GM10248 (cell line): ENCODE measurements at regions of chr11 and their contacts with region 1.

Region 1: GRCh38 chr11:75142714-75143419 is 8.0 kb upstream of the SLCO2B1 start:
- DNase-seq: peak; percentile 68
- CTCF ChIP-seq: peak; percentile 6

Region 2: GRCh38 chr11:74929431-74930363 is 213.2 kb before region 1 on chr11:
- CTCF ChIA-PET with region 1: interaction called, 22 read pairs
- POLR2A ChIA-PET with region 1: no interaction called
- DNase-seq: peak; percentile 54
- CTCF ChIP-seq: peak; percentile 90

Region 3: DNA sequence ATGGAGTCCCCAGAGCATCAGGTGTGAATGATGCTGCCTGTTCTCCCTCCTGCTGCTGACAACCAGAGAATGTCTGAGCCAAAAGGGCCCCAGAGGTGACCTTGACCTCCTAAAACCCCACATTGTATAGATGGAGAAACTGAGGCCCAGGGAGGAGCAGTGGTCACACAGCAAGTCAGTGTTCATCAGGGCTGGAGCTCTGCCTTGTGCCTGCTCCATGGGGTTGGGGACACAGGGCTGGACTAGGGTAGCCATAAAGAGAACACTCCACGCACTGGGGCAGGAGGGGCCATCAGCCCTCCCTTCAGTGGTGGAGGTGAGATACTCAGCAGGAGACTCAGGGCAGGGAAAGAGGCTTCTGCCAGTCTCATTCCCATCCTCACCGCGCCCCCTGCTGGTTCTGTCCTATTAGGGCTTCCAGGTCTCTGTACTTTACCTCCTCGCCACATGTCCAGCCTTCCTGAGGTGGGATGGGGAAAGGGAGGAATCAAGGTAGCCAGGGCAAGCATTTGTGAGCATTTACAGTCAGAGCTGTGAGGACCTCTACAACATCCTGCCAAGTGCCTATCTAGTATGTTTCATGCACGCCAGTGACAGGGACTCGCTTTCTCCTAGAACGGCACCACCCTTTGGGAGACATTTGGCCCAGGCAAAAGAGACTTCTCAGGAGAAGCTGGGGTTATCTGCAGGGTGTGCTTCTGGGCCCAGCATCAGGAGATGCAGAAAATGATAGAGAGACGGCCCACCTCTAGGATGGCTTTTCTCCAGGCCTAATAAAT is 110.9 kb before region 1 on chr11:
- CTCF ChIA-PET with region 1: interaction called, 12 read pairs
- POLR2A ChIA-PET with region 1: no interaction called
- DNase-seq: peak; percentile 74
- CTCF ChIP-seq: peak; percentile 82

Region 4: DNA sequence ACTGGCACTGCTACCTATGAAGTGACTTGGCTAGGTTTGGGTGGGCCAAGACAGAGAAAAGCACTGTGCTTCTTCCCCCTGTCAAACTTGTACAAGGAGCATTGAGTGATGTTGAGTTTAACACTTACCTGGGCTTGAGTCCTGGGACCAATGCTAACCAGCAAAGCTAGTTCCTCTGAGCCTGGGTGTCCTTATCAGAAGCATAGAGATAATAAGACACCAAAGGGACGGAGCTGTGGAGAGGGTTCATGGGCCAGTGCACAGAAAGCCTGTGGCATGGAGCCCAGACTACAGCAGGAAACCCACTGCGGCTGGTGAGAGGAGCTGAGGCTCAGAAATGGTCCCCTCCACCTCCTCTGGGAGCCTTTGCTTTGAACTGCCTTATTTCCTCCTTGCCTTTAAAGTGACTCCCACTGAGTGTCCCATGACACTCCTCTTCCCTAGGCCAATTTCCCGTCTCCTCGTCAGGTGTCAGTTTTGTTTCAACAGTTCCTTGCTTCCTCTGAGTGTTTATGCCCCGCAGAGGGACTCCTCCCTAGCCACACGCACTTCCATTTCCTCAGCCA is 17.4 kb after region 1 on chr11:
- CTCF ChIA-PET with region 1: interaction called, 126 read pairs
- POLR2A ChIA-PET with region 1: no interaction called
- DNase-seq: no peak
- CTCF ChIP-seq: no peak

Region 5: GRCh38 chr11:75204685-75205563 is 62.1 kb after region 1 on chr11:
- CTCF ChIA-PET with region 1: interaction called, 301 read pairs
- POLR2A ChIA-PET with region 1: interaction called, 3 read pairs
- DNase-seq: peak; percentile 88
- CTCF ChIP-seq: peak; percentile 92

Region 6: DNA sequence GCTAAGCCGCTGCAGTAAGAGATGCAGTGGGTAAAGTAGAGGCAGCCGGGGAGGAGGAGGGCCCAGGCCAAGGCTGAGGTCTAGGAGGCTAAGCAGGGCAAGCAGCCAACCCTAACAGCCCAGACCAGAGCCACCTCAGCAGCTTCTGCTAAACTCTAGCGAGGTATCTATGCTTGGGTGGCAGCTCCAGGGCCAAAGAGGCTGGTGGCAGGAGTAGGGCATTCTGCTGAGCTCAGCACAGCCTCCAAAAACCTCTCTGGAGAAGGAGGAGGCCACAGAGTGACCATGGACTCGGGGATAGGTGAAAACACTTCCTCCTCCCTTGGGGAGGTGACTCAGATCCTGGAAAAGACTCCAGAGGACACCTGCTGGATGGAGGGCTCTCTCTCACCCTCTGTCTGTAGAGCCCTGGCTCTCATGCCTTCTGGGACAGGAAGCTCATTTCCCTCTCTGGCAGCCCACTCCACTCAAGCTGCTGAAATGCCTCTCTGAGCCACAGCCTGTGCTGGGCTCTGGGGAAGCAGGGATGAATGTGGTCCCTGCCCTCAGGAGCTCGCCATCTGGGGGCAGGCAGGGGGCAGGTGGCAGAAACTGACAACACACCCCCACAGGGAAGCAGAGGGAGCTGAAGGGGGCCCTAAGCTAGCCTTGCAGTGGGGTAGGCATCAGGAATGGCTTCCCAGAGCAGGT is 81.2 kb after region 1 on chr11:
- CTCF ChIA-PET with region 1: interaction called, 13 read pairs
- POLR2A ChIA-PET with region 1: no interaction called
- DNase-seq: no peak
- CTCF ChIP-seq: no peak

Region 7: GRCh38 chr11:75263944-75264349 is 121.1 kb after region 1 on chr11:
- CTCF ChIA-PET with region 1: interaction called, 16 read pairs
- POLR2A ChIA-PET with region 1: no interaction called
- DNase-seq: no peak
- CTCF ChIP-seq: no peak

Region 8: GRCh38 chr11:75597636-75598035 is 454.8 kb after region 1 on chr11:
- CTCF ChIA-PET with region 1: no interaction called
- POLR2A ChIA-PET with region 1: no interaction called
- DNase-seq: peak; percentile 60
- CTCF ChIP-seq: peak; percentile 45